Activated naive CD4-positive, alpha-beta T cell treated with anti-CD3 and anti-CD28 coated beads for 36 hours (primary cell): ENCODE measurements at regions of chr22 and their contacts with region 1.

Region 1: GRCh38 chr22:36757668-36758211 is 18.2 kb downstream of the IFT27 start:
- DNase-seq: peak; percentile 90
- H3K4me3 Mint-ChIP-seq: no peak overlapping the region
- H3K27ac Mint-ChIP-seq: no peak overlapping the region
- H3K4me1 Mint-ChIP-seq: peaks cover 3% of the 10 kb centered on the region
- H3K27me3 Mint-ChIP-seq: peaks cover 5% of the 10 kb centered on the region

Region 2: DNA sequence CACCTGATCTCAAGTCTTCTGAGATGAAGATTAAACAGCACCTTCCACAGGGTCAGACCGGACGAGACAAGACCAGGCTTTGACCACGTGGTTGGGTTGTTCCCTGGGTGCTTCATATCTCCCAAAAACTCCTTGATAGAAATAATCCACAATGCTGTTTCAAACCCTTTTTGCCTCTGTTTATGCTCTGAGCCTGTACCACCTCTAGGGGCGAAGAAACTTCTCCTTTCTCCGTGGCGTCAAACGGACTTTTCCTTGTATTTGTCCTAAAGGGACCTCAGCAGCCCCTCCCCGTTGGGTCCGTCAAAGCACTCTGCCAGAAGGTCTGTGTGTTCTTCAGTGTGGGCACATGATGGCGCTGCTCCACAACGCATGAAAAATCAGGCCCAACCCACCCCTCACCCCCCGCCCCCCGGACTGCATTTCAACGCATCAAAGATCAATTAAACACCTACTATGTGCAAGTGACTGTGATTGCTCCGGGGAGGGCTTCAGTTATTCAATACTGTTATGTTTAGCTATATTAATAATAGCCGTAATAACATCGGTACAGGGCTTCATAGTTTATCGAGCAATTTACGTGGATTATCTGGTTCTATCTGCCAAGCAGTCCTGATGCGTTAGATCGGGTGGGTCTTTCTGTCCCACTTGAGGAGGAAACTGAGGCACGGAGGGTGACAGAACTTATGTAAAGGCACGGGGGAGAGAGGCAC is 211.5 kb before region 1 on chr22:
- CTCF ChIA-PET with region 1: no interaction called
- intact Hi-C with region 1: loop called (anchors 1 kb)
- DNase-seq: peak; percentile 59
- H3K4me3 Mint-ChIP-seq: no peak overlapping the region
- H3K27ac Mint-ChIP-seq: no peak overlapping the region
- H3K4me1 Mint-ChIP-seq: peaks cover 12% of the 10 kb centered on the region
- H3K27me3 Mint-ChIP-seq: peaks cover 15% of the 10 kb centered on the region

Region 3: DNA sequence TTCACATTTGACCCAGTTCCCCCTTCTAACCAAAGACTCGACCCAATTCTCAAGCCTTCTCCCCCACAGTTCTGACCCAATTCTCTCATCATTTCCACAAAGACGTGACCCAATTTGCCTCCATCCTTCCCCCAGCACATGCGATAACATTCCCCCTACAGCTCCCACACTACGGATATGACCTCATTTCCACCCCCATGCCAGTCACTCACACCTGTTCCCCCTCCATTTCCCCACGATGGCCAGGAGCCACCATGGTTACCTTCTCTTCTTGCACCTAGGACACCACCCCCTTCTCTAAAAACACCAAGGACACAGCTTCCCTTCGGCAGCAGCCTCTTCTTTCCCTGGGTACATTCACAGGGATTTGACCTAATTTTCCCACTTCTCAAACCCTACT is 79.3 kb before region 1 on chr22:
- CTCF ChIA-PET with region 1: no interaction called
- intact Hi-C with region 1: no loop called
- DNase-seq: no peak
- H3K4me3 Mint-ChIP-seq: no peak overlapping the region
- H3K27ac Mint-ChIP-seq: no peak overlapping the region
- H3K4me1 Mint-ChIP-seq: no peaks in the 10 kb centered on the region
- H3K27me3 Mint-ChIP-seq: peaks cover 8% of the 10 kb centered on the region

Region 4: DNA sequence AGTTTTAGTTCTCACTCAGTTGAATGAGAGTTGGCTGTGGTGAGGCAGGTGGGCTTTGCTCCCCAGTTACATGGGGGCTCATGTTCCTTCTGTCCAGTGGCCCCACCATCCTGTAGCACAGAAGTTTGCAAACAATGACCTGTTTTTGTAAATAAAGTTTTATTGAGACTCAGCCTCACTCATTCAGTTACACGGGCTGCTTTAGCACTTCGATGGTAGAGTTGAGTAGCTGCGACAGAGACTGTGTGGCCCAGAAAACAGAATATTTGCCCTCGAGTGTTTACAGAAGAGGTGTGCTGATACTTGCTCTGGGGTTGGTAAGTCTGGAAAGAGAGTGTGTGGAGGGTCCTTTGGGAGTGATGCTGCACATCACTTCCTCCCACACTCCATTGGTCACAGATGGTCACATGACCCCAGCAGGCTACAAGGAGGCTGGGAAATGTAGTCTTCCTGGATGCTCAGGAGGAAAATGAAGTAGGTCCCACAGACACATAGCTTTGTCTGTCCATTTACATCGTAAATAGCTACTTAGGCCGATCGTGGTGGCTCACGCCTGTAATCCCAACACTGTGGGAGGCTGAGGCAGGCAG is 16.4 kb before region 1 on chr22:
- CTCF ChIA-PET with region 1: interaction called, 10 read pairs
- intact Hi-C with region 1: no loop called
- DNase-seq: no peak
- H3K4me3 Mint-ChIP-seq: no peak overlapping the region
- H3K27ac Mint-ChIP-seq: no peak overlapping the region
- H3K4me1 Mint-ChIP-seq: no peaks in the 10 kb centered on the region
- H3K27me3 Mint-ChIP-seq: peaks cover 12% of the 10 kb centered on the region

Region 5: DNA sequence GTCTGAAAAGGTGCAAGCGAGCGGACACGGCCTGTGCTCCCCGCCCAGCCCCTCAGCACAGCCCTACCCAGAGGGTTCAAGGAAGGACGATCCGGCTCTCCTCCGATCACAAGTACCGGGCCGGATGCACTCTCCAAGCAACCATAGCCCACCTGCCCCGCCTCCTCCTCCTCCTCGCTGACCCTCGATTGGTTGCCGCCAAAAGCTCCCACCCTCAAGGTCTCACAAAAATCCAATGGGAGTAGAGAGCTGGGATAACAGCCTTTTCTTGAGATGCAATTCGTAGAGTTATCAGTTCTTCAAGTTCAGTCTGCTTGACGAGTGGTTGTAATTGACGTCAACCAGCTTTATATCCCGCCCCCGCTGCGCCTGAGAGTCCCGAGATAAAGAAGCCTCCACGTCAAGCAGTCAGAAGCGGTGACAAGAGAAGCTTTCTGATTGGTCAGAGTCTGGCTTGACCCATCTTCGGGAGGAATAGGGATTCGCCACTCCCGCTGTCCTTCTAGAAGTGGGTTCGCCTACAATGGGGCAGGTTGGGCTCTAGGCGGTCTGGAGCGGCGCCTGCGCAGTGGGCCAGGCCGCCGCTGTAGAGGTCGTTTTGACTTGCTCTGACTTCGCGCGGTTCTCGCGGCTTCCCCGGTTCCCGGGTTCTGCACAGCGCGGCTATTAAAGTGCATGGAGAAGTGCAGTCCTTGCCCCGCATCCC is 18.4 kb after region 1 on chr22 and contains the start of gene IFT27:
- CTCF ChIA-PET with region 1: interaction called, 34 read pairs
- intact Hi-C with region 1: loop called (anchors 2 kb)
- DNase-seq: peak; percentile 99
- H3K4me3 Mint-ChIP-seq: peak within 1 kb of the TSS; percentile 91
- H3K27ac Mint-ChIP-seq: peak within 1 kb of the TSS; percentile 90
- H3K4me1 Mint-ChIP-seq: peaks cover 27% of the 10 kb centered on the region
- H3K27me3 Mint-ChIP-seq: no peaks in the 10 kb centered on the region
- total RNA-seq, gene IFT27: 15.7 to 16.2 TPM

Region 6: GRCh38 chr22:36781656-36782627 is 24.2 kb after region 1 on chr22:
- CTCF ChIA-PET with region 1: no interaction called
- intact Hi-C with region 1: loop called (anchors 1 kb)
- DNase-seq: peak; percentile 94
- H3K4me3 Mint-ChIP-seq: peak overlapping the region; percentile 28
- H3K27ac Mint-ChIP-seq: peak overlapping the region; percentile 72
- H3K4me1 Mint-ChIP-seq: peaks cover 26% of the 10 kb centered on the region
- H3K27me3 Mint-ChIP-seq: peaks cover 3% of the 10 kb centered on the region

Region 7: GRCh38 chr22:36835903-36836302 is 78.2 kb after region 1 on chr22:
- CTCF ChIA-PET with region 1: no interaction called
- intact Hi-C with region 1: no loop called
- DNase-seq: no peak
- H3K4me3 Mint-ChIP-seq: no peak overlapping the region
- H3K27ac Mint-ChIP-seq: no peak overlapping the region
- H3K4me1 Mint-ChIP-seq: peaks cover 4% of the 10 kb centered on the region
- H3K27me3 Mint-ChIP-seq: peaks cover 13% of the 10 kb centered on the region